Psoas muscle (tissue), 8 donors: ENCODE measurements at regions of chr4 and their contacts with region 1.

Region 1: DNA sequence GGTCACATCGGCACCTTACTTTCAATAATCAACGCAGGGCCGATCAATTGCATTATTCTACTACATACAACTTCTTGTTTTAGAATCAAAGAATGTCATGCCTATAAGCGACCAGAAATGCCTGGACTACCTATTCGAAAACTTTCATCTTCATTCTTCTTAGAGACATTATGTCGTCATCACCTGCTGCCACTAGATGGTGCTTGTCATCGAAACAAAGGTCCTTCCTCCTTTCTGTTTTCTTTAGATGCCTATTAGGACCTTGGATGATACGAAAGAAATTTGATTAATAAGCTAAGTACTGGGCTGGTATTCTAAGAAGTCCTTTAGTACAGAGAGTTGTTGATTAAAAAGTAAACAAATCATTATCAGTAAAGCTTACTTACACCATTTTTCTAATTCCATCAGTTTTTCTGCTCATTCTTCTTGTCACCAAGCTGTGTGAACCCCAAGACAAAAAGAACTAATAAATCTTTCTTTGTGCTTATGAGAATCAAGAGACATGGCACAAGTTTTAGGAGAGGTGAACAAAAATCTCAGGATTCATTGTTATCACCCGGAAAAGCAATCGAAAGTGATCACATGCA is 154.5 kb upstream of the SLC4A4 start:
- DNase-seq: no peak
- ATAC-seq: peak in 1 of 4 donors; percentile 41
- H3K4me3 ChIP-seq: no peak overlapping the region
- H3K27ac ChIP-seq: no peak overlapping the region
- H3K4me1 ChIP-seq: peaks cover 10% of the 10 kb centered on the region
- H3K27me3 ChIP-seq: no peaks in the 10 kb centered on the region
- CTCF ChIP-seq: peak; percentile 68

Region 2: GRCh38 chr4:71553605-71554004 is 369.3 kb after region 1 on chr4:
- intact Hi-C with region 1: loop called (anchors 5 to 10 kb)
- DNase-seq: no peak
- ATAC-seq: peak; percentile 62 to 87 (median 70)
- H3K4me3 ChIP-seq: no peak overlapping the region
- H3K27ac ChIP-seq: no peak overlapping the region
- H3K4me1 ChIP-seq: no peaks in the 10 kb centered on the region
- H3K27me3 ChIP-seq: no peaks in the 10 kb centered on the region
- CTCF ChIP-seq: peak; percentile 64

Region 3: GRCh38 chr4:71713611-71714203 is 529.4 kb after region 1 on chr4:
- intact Hi-C with region 1: loop called (anchors 2 to 10 kb)
- DNase-seq: no peak
- ATAC-seq: no peak
- H3K4me3 ChIP-seq: no peak overlapping the region
- H3K27ac ChIP-seq: no peak overlapping the region
- H3K4me1 ChIP-seq: no peaks in the 10 kb centered on the region
- H3K27me3 ChIP-seq: no peaks in the 10 kb centered on the region
- CTCF ChIP-seq: peak; percentile 54